ENCODE measurements at regions of chr7 and their contacts with region 1.

Region 1: DNA sequence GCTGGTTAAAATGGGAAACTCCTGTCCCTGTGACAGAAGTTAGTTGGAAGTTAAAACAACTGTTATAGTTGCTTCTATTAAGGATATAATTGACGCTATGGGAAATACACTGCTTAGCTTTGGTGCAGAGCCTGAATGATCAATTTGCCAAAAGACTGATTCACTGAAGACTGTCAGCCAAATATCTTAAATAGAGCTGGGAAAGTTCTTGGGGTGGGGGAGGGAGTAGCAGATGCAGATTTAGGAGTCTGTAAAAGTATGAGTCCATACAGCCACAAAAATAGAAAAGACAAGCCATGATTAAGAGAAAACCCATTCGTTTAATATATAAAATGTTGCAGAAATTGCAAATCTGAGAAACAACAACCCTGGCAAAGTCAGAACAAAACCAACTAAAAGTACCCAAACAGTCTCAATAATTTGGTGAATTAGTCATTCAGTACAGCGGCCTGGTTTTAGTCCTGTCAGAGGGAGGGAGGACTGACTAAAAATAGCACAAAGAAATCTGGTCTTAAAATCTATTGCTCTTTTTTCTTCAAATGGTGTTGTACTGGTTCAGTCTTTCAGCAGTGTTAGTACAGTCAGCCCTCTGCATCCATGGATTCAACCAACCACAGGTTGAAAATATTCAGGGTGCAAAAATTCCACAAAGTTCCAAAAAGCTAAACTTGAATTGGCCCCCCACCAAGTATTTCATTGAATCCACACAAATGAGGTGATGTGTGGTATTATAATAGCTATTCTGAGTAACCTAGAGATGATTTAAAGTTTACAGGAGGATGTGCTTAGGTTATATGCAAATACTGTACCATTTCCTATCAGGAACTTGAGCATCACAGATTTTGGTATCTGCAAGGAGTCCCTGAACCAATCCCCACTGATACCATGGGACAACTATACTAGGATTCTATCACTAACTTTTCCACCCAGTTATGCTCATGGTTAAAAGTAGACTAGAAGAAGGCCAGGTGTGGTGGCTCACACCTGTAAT is 30.0 kb downstream of the STK17A start:
- DNase-seq: peak; percentile 54
- H3K4me3 Mint-ChIP-seq: peak overlapping the region; percentile 6
- H3K27ac Mint-ChIP-seq: peak overlapping the region; percentile 77
- H3K4me1 Mint-ChIP-seq: peaks cover 72% of the 10 kb centered on the region
- H3K27me3 Mint-ChIP-seq: no peaks in the 10 kb centered on the region

Region 2: GRCh38 chr7:43590862-43591550 is 21.9 kb before region 1 on chr7:
- CTCF ChIA-PET with region 1: interaction called, 4 read pairs
- intact Hi-C with region 1: loop called (anchors 1 kb)
- DNase-seq: peak; percentile 73
- H3K4me3 Mint-ChIP-seq: peak overlapping the region; percentile 37
- H3K27ac Mint-ChIP-seq: peak overlapping the region; percentile 39
- H3K4me1 Mint-ChIP-seq: peaks cover 81% of the 10 kb centered on the region
- H3K27me3 Mint-ChIP-seq: no peaks in the 10 kb centered on the region

Region 3: GRCh38 chr7:43602271-43602670 is 10.6 kb before region 1 on chr7:
- CTCF ChIA-PET with region 1: interaction called, 4 read pairs
- intact Hi-C with region 1: loop called (anchors 1 kb)
- DNase-seq: no peak
- H3K4me3 Mint-ChIP-seq: no peak overlapping the region
- H3K27ac Mint-ChIP-seq: no peak overlapping the region
- H3K4me1 Mint-ChIP-seq: peaks cover 46% of the 10 kb centered on the region
- H3K27me3 Mint-ChIP-seq: no peaks in the 10 kb centered on the region

Region 4: DNA sequence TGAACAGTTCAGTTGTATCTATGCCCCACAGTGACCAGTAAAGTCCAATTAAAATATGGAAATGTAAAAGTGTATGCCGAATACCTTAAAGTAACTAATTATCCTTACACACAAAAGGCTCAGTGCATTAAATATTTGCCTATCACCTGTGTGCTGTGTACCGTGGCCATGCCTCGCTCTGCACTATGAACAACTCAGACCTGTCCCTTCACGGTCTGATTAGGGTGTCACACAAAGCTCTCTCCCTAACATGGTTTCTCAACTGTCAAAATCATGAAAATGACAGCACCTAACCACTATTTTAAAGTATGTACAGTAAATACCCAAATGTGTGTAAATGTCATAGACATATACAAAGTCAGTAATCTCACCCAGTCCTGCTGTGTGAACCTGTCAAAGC is 13.1 kb after region 1 on chr7:
- CTCF ChIA-PET with region 1: no interaction called
- intact Hi-C with region 1: loop called (anchors 1 kb)
- DNase-seq: no peak
- H3K4me3 Mint-ChIP-seq: no peak overlapping the region
- H3K27ac Mint-ChIP-seq: peak overlapping the region; percentile 66
- H3K4me1 Mint-ChIP-seq: peaks cover 90% of the 10 kb centered on the region
- H3K27me3 Mint-ChIP-seq: no peaks in the 10 kb centered on the region

Region 5: DNA sequence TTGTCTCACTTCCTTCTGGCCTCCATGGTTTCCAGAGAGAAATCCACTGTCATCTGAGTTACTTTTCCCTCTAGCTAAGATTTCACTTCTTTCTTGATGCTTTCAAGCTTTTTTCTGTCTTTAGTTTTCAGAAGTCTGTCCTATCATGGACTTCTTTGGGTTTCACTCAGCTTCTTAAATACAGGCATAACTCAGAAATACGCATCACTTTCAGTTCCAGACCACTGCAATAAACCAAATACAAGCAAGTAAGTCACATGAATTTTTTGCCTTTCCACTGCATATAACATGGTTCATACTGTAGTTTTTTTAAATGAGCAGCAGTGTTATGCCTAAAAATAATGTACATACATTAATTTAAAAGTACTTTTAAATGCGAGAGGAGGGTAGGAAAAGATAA is 18.7 kb after region 1 on chr7:
- CTCF ChIA-PET with region 1: no interaction called
- intact Hi-C with region 1: loop called (anchors 1 kb)
- DNase-seq: no peak
- H3K4me3 Mint-ChIP-seq: no peak overlapping the region
- H3K27ac Mint-ChIP-seq: peak overlapping the region; percentile 74
- H3K4me1 Mint-ChIP-seq: peaks cover 84% of the 10 kb centered on the region
- H3K27me3 Mint-ChIP-seq: no peaks in the 10 kb centered on the region

Region 6: GRCh38 chr7:43639858-43640491 is 27.1 kb after region 1 on chr7:
- CTCF ChIA-PET with region 1: no interaction called
- intact Hi-C with region 1: loop called (anchors 2 kb)
- DNase-seq: no peak
- H3K4me3 Mint-ChIP-seq: no peak overlapping the region
- H3K27ac Mint-ChIP-seq: peak overlapping the region; percentile 65
- H3K4me1 Mint-ChIP-seq: peaks cover 83% of the 10 kb centered on the region
- H3K27me3 Mint-ChIP-seq: no peaks in the 10 kb centered on the region

Region 7: DNA sequence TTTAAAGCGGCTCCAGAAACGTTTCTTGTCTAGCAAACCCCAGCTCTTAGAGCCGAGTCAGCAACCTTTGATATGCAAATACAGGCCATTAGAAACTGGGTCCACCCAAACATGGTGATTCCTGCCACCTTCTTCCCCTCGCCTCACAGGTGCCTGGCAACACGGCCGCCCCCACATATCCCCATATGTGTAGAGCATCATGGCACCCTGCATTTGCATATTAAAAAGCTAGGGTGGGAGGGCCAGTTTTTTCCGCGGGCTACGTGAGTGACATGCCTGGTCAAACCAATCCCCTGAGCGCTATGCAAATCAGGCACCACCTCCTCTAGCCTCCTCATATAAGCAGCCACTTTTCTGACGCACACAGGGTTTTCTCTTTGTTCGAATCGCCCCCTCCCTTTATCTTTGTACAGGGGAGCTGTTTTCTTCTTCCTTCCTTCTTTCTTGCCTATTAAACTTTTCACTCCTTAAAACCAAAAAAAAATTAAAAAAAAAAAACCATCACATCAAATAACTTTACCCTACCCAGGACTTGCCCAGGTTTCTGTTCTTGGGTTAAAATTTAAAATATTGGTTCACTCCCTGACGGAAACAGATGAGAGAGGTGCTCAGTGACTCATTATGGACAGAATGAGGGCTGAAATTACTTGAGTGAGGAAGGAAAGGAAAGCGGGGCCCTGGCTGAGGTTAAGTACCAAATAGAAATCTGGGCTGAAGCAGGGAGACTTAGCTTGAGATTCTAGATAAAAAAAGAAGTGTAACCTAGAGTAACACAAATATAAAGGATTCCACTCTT is 56.6 kb after region 1 on chr7:
- CTCF ChIA-PET with region 1: interaction called, 3 read pairs
- intact Hi-C with region 1: loop called (anchors 1 kb)
- DNase-seq: peak; percentile 90
- H3K4me3 Mint-ChIP-seq: peak overlapping the region; percentile 71
- H3K27ac Mint-ChIP-seq: peak overlapping the region; percentile 96
- H3K4me1 Mint-ChIP-seq: peaks cover 87% of the 10 kb centered on the region
- H3K27me3 Mint-ChIP-seq: no peaks in the 10 kb centered on the region

Measured in activated naive CD4-positive, alpha-beta T cell treated with anti-CD3 and anti-CD28 coated beads for 36 hours (primary cell).